ENCODE measurements at regions of chr17 and their contacts with region 1.

Region 1: DNA sequence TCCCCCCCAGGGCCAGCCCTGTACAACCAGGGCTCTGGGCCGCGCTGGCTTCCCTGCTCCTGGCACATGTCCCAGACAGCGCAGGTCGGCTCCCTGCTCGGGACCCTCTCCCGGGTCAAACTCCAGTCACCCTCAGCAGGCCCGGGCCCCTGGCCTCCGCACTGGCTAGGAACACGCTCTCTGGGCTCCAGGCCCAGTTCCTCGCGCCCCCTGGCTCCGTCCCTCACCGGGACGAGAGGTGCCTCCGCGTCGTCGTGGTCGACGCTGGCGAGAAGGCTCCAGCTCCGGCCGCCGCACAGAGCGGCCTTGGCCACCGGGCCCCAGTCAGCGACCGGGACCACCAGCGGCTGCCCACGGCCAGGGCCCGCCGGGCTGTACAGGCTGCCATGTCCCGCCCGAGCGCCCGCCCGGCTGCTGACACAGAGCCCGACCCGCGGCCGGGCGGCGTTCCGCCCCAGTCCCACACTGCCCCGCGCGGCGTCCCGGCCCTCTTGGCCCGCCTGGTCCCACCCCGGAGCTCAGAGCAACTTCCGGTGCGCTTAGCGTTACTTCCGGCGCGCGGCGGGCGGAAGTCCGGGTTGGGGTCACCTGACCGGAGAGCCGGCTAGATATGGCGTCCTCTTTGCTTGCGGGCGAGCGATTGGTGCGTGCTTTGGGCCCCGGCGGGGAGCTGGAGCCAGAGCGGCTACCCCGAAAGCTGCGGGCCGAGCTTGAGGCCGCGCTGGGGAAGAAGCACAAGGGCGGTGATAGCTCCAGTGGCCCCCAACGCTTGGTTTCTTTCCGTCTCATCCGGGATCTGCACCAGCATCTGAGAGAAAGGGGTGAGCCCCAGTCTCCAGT is at the start of gene POLDIP2:
- DNase-seq: peak; percentile 59 to 94
- H3K4me3 ChIP-seq: peak within 1 kb of the TSS; percentile 82 to 97 (median 86)
- H3K27ac ChIP-seq: peak within 1 kb of the TSS; percentile 70
- H3K4me1 ChIP-seq: peaks cover 3 to 13% (median 5%) of the 10 kb centered on the region in 4 experiments; a peak in 6 of 7 replicates
- H3K27me3 ChIP-seq: no peaks in the 10 kb centered on the region
- CTCF ChIP-seq: no peak
- EP300 ChIP-seq: peak in 1 of 2 experiments; percentile 42; a peak in 1 of 3 replicates
- POLR2A ChIP-seq: peak; percentile 60 to 91
- RAD21 ChIP-seq: 0 out of 4 replicates have a peak, but pooled peaks of 1 of the 2 experiments have one; percentile 4
- total RNA-seq, gene POLDIP2: 74.0 and 75.3 TPM in 2 replicates

Region 2: GRCh38 chr17:28318759-28319660 is 38.3 kb before region 1 on chr17 and contains the start of gene TMEM97:
- CTCF ChIA-PET with region 1: no interaction called
- POLR2A ChIA-PET with region 1: interaction called, 14 read pairs
- DNase-seq: peak; percentile 73 to 92
- H3K4me3 ChIP-seq: peak within 1 kb of the TSS; percentile 63 to 90 (median 70)
- H3K27ac ChIP-seq: peak within 1 kb of the TSS; percentile 56
- H3K4me1 ChIP-seq: peaks cover 4 to 26% (median 13%) of the 10 kb centered on the region in 4 experiments
- H3K27me3 ChIP-seq: peaks cover 0 to 3% (median 0%) of the 10 kb centered on the region in 4 experiments; a peak in 1 of 7 replicates
- CTCF ChIP-seq: no peak
- EP300 ChIP-seq: no peak
- POLR2A ChIP-seq: peak in 1 of 2 experiments; percentile 56; a peak in 1 of 3 replicates
- RAD21 ChIP-seq: no peak
- total RNA-seq, gene TMEM97: 130 and 136 TPM in 2 replicates

Region 3: DNA sequence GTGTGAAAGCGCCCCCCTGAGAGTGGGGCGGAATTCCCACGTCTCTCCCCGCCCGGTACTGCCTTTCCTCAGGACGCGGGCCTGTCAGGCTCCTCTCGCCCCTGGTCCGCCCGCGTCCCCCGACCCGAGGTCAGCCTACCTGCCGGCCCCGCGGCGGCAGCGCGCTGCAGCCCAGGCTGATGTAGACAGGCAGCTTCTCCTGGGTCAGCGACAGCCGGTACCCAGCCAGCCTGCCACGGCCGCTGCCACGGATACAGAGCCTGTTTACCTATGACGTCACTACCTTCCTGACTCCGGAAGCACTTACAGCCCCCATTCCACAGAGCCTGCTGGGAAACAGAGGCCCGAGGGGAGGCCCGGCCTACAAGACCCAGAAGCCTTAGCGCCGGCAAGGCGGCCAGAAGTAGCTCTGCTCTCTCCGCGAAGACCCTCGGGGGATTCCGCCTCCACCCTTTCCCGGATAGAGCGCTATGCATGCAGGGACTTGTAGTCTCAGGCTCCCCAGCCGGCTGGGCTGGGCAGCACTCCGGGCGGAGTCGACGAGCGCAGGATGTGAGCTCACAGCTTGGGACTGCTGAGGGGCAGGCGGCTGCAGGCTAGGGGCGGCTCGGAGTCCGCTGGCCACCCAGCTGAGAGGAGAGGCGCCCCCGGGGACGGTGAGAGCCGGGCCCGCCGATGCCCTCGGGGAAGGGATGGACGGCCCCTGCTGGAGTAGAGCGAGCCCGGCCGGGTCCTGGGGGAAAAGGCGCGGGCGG is 21.9 kb before region 1 on chr17 and contains the starts of genes IFT20 and TNFAIP1:
- CTCF ChIA-PET with region 1: interaction called, 5 read pairs
- POLR2A ChIA-PET with region 1: interaction called, 18 read pairs
- DNase-seq: peak; percentile 94 to 100
- H3K4me3 ChIP-seq: peak within 1 kb of the TSS; percentile 87 to 95 (median 92)
- H3K27ac ChIP-seq: peak within 1 kb of the TSS; percentile 72
- H3K4me1 ChIP-seq: peaks cover 0 to 10% (median 8%) of the 10 kb centered on the region in 4 experiments; a peak in 6 of 7 replicates
- H3K27me3 ChIP-seq: no peaks in the 10 kb centered on the region
- CTCF ChIP-seq: no peak
- EP300 ChIP-seq: peak in 1 of 2 experiments; percentile 78; a peak in 1 of 3 replicates
- POLR2A ChIP-seq: peak in 1 of 2 experiments; percentile 64; a peak in 2 of 3 replicates
- RAD21 ChIP-seq: no peak
- total RNA-seq, gene IFT20: 19.3 and 21.0 TPM in 2 replicates
- total RNA-seq, gene TNFAIP1: 19.5 and 22.8 TPM in 2 replicates

Region 4: GRCh38 chr17:28346746-28347246 is 10.5 kb before region 1 on chr17:
- CTCF ChIA-PET with region 1: interaction called, 5 read pairs
- POLR2A ChIA-PET with region 1: interaction called, 92 read pairs
- DNase-seq: no peak
- H3K4me3 ChIP-seq: no peak overlapping the region
- H3K27ac ChIP-seq: no peak overlapping the region
- H3K4me1 ChIP-seq: peaks cover 0 to 4% (median 0%) of the 10 kb centered on the region in 4 experiments; a peak in 3 of 7 replicates
- H3K27me3 ChIP-seq: no peaks in the 10 kb centered on the region
- CTCF ChIP-seq: peak; percentile 21 to 33 (median 22); a peak in 3 of 4 replicates
- EP300 ChIP-seq: no peak
- POLR2A ChIP-seq: no peak
- RAD21 ChIP-seq: peak; percentile 26 to 51; a peak in 3 of 4 replicates

Region 5: GRCh38 chr17:28371245-28372202 is 14.2 kb after region 1 on chr17 and contains the start of gene SARM1:
- CTCF ChIA-PET with region 1: interaction called, 20 read pairs
- POLR2A ChIA-PET with region 1: interaction called, 103 read pairs
- DNase-seq: peak; percentile 92 to 99
- H3K4me3 ChIP-seq: peak within 1 kb of the TSS; percentile 56 to 79 (median 74)
- H3K27ac ChIP-seq: no peak within 1 kb of the TSS
- H3K4me1 ChIP-seq: peaks cover 3 to 16% (median 9%) of the 10 kb centered on the region in 4 experiments; a peak in 6 of 7 replicates
- H3K27me3 ChIP-seq: peaks cover 9 to 19% (median 19%) of the 10 kb centered on the region in 4 experiments
- CTCF ChIP-seq: no peak
- EP300 ChIP-seq: no peak
- POLR2A ChIP-seq: no peak
- RAD21 ChIP-seq: no peak
- total RNA-seq, gene SARM1: 6.5 and 9.2 TPM in 2 replicates